ENCODE measurements at regions of chr12 and their contacts with region 1.

Region 1: DNA sequence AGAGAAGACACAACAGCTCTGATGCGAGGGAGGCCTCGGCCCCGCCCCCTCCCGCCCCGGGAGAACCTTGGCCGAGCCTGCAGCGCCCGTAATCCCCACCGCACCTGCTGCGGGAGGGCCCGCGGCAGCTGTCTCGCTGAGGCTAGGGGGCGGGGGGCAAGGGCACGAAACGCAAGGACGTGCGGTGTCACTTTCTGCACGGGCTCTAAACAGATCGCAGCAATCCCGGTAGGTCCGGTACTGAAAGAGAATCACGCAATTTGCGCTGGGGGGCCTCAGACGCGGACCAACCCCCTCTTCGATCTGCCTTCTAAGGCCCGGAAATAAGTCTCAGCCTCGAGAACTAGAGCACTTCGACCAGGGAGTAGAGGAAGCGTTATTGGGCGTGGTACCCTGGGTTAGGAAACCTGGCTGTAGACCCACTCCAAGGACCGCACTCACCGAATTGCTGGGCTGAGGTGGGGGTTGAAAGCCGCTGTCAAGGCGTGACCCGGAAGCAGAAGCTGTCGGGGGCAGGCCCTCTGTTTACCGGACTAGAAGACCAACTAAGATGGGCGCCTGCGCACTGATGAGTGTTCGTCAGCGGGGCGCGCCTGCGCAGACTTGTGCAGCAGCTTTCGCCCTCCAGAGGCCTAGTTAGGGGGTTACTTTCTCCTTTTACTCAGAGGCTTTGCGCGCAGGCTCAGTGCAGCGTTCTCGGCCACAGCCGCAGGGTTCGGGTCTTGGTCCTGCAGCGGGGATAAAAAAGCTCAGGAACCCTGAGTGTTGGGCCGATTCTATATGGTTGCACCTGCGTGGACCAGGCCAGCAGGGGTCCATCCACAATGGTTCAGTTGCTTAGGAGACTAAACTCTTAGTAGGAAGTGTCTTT is at the start of gene ASB8:
- DNase-seq: peak; percentile 98 to 99 (median 98)
- H3K4me3 ChIP-seq: peak within 1 kb of the TSS; percentile 76 to 84
- H3K4me3 Mint-ChIP-seq: peak within 1 kb of the TSS; percentile 94 to 98 (median 97)
- H3K27ac ChIP-seq: peak within 1 kb of the TSS; percentile 81
- H3K27ac Mint-ChIP-seq: peak within 1 kb of the TSS; percentile 96 to 99 (median 99)
- H3K4me1 ChIP-seq: peaks cover 23% of the 10 kb centered on the region
- H3K4me1 Mint-ChIP-seq: peaks cover 16 to 49% (median 35%) of the 10 kb centered on the region in 4 donors
- H3K27me3 ChIP-seq: no peaks in the 10 kb centered on the region
- H3K27me3 Mint-ChIP-seq: no peaks in the 10 kb centered on the region
- total RNA-seq, gene ASB8: 61.0 to 64.6 TPM

Region 2: DNA sequence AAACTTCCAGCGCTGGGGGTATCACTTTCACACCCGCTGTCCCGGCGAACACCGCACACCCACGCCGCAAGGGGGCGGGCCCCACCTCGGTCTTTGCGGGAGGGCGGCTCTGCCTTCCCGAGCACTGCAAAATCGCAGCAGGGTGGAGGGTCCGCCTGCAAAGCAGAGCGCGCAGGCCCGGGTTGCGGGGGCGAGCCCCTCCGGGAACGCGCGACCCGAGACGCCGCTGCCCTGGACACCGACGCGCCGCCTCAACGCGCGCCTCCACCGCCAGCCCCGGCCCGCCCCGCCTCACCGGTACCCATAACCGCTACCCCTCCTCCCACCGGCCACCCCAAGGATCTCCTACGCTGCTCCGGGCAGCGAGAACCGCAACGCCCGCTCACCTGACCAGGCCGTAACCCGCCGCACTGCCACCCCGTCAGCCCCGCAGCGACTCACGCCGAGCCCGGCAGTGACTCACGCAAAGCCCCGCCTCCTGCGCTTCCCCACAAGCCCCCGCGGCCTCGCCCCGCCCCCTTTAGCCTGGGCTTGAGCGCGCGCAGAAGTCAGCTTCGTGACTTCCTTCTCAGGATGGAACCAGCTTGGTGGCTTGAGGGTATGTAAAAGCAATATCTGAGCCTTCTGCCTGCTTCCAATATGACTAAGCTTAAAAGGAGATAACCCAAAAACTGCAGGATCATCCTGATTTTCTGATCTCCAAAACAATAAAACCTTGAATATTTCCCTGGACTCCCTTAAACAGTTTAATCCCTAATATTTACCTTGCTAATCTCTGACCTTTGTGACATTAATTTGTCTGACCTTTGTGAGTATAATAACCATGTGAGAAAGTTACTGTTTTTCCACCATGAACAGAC is 451.5 kb before region 1 on chr12 and contains the start of gene RPAP3:
- CTCF ChIA-PET with region 1: no interaction called
- POLR2A ChIA-PET with region 1: interaction called, 7 read pairs
- intact Hi-C with region 1: loop called (anchors 2 kb)
- DNase-seq: peak; percentile 93 to 96 (median 93)
- H3K4me3 ChIP-seq: peak within 1 kb of the TSS; percentile 60 to 70
- H3K4me3 Mint-ChIP-seq: peak within 1 kb of the TSS; percentile 95 to 100 (median 98)
- H3K27ac ChIP-seq: peak within 1 kb of the TSS; percentile 81
- H3K27ac Mint-ChIP-seq: peak within 1 kb of the TSS; percentile 93 to 99 (median 97)
- H3K4me1 ChIP-seq: peaks cover 54% of the 10 kb centered on the region
- H3K4me1 Mint-ChIP-seq: peaks cover 35 to 56% (median 47%) of the 10 kb centered on the region in 4 donors
- H3K27me3 ChIP-seq: no peaks in the 10 kb centered on the region
- H3K27me3 Mint-ChIP-seq: no peaks in the 10 kb centered on the region
- total RNA-seq, gene RPAP3: 40.8 to 41.8 TPM

Region 3: DNA sequence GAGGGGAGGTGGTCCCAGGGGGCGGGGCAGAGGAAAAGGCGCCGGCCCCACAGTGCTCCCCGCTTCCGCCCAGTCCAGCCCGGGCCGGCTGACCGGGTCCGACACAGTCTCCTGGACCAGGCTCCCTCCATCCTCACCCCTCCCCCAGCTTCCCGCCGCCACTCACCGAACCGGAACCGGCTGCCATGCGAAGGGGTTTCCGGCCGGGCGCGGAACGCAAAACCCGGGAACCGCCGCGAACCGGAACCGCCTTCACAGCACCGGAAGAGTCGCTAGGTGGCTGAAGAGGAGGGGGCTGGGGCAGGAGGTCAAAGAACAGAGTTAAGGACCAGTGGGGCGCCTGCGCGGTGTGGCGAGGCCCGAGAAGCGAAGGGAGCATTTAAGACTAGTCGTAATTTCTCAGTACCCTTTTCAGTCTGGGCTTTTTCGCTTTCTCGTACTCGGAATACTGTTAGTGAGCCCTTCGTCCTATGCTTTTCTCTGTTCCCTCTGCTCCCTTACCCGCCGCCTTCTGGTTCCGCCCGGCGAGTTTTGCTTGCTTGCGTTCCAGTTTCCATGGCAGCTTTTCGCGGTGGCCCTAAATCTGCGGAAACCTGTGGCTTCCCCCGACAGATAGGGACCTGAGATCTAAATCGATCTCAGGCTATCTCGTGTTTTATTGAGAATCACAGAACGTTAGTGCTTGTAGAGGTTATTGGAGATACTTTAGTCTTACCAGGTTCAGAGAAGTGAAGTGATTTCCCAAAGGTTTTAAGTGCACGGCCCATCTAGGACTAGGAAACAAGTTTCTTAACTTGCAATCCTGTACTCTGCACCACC is 51.2 kb before region 1 on chr12 and contains the start of gene SENP1:
- CTCF ChIA-PET with region 1: interaction called, 42 read pairs
- POLR2A ChIA-PET with region 1: interaction called, 90 read pairs
- intact Hi-C with region 1: loop called (anchors 1 kb)
- DNase-seq: peak; percentile 91 to 93 (median 92)
- H3K4me3 ChIP-seq: peak within 1 kb of the TSS; percentile 84 to 93
- H3K4me3 Mint-ChIP-seq: peak within 1 kb of the TSS; percentile 89 to 97 (median 92)
- H3K27ac ChIP-seq: peak within 1 kb of the TSS; percentile 96
- H3K27ac Mint-ChIP-seq: peak within 1 kb of the TSS; percentile 93 to 100 (median 99)
- H3K4me1 ChIP-seq: peaks cover 42% of the 10 kb centered on the region
- H3K4me1 Mint-ChIP-seq: peaks cover 42 to 65% (median 52%) of the 10 kb centered on the region in 4 donors
- H3K27me3 ChIP-seq: no peaks in the 10 kb centered on the region
- H3K27me3 Mint-ChIP-seq: no peaks in the 10 kb centered on the region
- total RNA-seq, gene SENP1: 28.7 to 35.1 TPM

Region 4: GRCh38 chr12:48119078-48119833 is 38.0 kb before region 1 on chr12 and contains the start of gene PFKM:
- CTCF ChIA-PET with region 1: interaction called, 5 read pairs
- POLR2A ChIA-PET with region 1: interaction called, 14 read pairs
- intact Hi-C with region 1: no loop called
- DNase-seq: peak; percentile 64 to 73 (median 66)
- H3K4me3 ChIP-seq: peak within 1 kb of the TSS; percentile 56 to 77
- H3K4me3 Mint-ChIP-seq: peak within 1 kb of the TSS; percentile 91 to 100 (median 98)
- H3K27ac ChIP-seq: peak within 1 kb of the TSS; percentile 33
- H3K27ac Mint-ChIP-seq: peak within 1 kb of the TSS in 6 of 7 donors; percentile 93 to 98 (median 95)
- H3K4me1 ChIP-seq: peaks cover 15% of the 10 kb centered on the region
- H3K4me1 Mint-ChIP-seq: peaks cover 18 to 28% (median 18%) of the 10 kb centered on the region in 4 donors
- H3K27me3 ChIP-seq: no peaks in the 10 kb centered on the region
- H3K27me3 Mint-ChIP-seq: peaks cover 4 to 6% of the 10 kb centered on the region in 2 donors
- total RNA-seq, gene PFKM: 13.6 to 14.6 TPM